ENCODE measurements at regions of chr22 and their contacts with region 1.

Region 1: DNA sequence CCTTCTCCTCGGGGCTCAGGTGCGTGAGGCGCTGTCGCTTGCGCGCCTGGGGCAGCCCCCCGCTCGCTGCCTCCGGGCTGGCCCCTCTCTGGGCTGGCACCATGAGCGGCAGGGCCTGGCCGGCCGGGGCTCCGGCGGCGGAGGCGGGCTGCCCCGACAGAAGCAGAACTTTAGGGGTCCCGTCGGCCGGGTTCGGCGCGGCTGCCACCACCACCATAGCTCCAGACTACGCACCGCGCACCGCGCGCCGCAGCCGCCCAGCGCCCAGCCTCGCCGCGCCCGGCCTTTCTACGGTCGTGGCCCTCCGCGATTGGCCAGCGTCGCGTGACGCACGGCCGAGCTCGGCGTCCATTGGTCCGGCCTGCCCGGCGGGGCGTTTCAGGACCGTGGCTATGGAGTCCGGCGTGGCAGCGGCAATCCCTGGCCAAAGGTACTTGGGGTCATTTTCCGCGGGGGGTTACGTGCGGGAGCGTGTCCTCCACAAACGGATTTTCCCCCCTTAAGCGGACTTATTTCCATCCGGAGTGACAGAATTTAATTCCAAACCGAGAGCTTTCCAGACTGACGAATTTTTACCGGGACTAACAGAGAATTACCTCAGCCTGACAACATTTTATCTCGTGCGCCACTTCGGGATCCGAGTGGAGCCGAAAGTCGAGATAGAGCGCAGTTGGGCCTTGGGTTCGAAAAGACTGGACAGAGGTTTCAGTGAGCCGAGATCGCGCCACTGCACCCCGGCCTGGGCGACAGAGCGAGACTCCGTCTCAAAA is at the start of gene XBP1:
- DNase-seq: peak; percentile 93 to 96
- ATAC-seq: peak; percentile 97 to 99 (median 98)
- H3K4me3 ChIP-seq: peak within 1 kb of the TSS; percentile 39 to 96 (median 88)
- H3K27ac ChIP-seq: peak within 1 kb of the TSS; percentile 93 to 100 (median 100)
- H3K4me1 ChIP-seq: peaks cover 11 to 62% (median 55%) of the 10 kb centered on the region in 9 donors
- H3K27me3 ChIP-seq: no peaks in the 10 kb centered on the region
- CTCF ChIP-seq: no peak
- total RNA-seq, gene XBP1: 56.5 to 140 (median 67.9) TPM

Region 2: GRCh38 chr22:28594797-28595462 is 205.6 kb before region 1 on chr22:
- intact Hi-C with region 1: no loop called
- DNase-seq: no peak
- ATAC-seq: peak; percentile 70 to 92 (median 90)
- H3K4me3 ChIP-seq: no peak overlapping the region
- H3K27ac ChIP-seq: no peak overlapping the region
- H3K4me1 ChIP-seq: peaks cover 0 to 8% (median 0%) of the 10 kb centered on the region in 9 donors
- H3K27me3 ChIP-seq: no peaks in the 10 kb centered on the region
- CTCF ChIP-seq: peak; percentile 49 to 91 (median 76)

Region 3: DNA sequence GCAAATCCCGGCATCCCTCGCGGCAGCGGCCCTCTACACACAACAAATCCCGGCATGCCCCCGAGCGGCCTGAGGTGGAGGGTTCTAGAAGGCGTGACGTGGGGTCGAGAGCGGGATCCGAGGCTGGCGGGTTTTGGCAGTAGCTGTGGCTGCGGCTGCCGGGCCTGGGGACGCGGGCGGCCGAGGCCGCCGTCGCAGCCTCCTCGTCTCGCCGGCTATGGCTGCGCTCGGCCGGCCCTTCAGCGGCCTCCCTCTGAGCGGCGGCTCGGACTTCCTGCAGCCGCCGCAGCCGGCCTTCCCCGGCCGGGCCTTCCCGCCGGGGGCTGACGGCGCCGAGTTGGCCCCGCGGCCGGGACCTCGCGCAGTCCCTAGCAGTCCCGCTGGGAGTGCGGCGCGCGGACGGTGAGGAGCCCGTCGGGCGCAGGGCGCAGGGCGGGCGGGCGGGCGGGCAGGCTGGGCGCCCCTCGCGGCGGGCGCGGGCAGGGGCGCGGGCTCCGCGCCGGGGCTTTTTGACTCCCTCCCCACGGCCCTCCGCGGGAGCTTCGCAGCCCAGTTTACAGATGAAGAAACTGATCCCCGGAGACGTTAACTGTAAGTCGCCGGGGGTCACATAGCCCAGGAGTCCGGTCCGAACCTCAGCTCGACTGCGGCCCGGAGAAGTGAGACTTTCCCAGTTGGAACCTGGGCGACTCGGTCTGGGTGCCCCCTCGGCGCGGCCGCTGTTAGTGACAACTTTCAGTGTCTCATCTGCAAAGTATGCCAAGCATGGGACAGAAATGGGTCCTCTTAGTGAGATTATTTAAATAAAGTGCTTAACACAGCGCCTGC is 27.6 kb before region 1 on chr22 and contains the start of gene CCDC117:
- intact Hi-C with region 1: loop called in 1 of 10 experiments (anchors 1 kb)
- DNase-seq: peak; percentile 95
- ATAC-seq: peak; percentile 97 to 99 (median 98)
- H3K4me3 ChIP-seq: peak within 1 kb of the TSS; percentile 65 to 88 (median 78)
- H3K27ac ChIP-seq: peak within 1 kb of the TSS; percentile 87 to 99 (median 97)
- H3K4me1 ChIP-seq: peaks cover 5 to 46% (median 33%) of the 10 kb centered on the region in 9 donors
- H3K27me3 ChIP-seq: no peaks in the 10 kb centered on the region
- CTCF ChIP-seq: peak in 4 of 9 donors; percentile 32 to 54 (median 36)
- total RNA-seq, gene CCDC117: 7.7 to 15.0 (median 11.5) TPM

Region 4: DNA sequence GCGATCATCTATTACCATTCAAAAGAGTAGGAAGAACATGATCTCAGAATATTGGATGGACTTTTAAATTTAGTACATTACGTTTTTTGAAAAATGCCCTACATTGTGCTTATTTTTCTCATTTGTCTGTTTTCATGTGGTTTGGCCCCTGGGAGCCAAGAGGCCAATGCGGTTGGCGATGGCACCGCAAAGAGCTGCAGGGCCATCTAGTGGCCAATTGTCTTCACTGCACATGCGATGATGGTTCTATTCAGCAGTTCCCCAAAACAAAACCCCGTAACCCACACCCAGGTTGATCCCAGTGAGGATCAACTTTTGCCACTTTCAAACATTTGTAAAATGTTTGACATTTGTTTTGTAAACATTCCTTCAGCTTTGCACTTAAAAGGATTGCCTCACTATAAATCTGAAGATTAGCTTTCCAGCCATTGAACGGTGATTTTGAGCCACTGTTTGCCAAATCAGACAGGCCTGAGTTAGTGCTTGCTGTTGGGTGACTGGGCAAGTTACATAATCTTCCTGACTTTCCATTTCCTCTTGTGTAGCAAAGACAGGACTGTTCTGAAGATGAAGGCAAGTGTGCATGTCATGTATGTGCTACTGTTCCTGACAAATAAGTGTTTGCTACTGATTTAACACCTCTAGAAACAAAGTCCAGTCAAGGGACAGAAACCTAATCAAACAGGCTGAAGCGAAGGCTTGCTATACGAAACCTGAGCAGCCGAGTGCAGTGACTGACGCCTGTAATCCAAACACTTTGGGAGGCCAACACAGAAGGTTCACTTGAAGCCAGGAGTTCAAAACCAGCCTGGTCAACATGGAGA is 29.1 kb after region 1 on chr22:
- intact Hi-C with region 1: no loop called
- DNase-seq: peak; percentile 67 to 74
- ATAC-seq: peak; percentile 78 to 93 (median 88)
- H3K4me3 ChIP-seq: no peak overlapping the region
- H3K27ac ChIP-seq: peak overlapping the region in 1 of 10 donors; percentile 29
- H3K4me1 ChIP-seq: peaks cover 0 to 12% (median 0%) of the 10 kb centered on the region in 9 donors
- H3K27me3 ChIP-seq: no peaks in the 10 kb centered on the region
- CTCF ChIP-seq: peak; percentile 97 to 99 (median 98)

Region 5: DNA sequence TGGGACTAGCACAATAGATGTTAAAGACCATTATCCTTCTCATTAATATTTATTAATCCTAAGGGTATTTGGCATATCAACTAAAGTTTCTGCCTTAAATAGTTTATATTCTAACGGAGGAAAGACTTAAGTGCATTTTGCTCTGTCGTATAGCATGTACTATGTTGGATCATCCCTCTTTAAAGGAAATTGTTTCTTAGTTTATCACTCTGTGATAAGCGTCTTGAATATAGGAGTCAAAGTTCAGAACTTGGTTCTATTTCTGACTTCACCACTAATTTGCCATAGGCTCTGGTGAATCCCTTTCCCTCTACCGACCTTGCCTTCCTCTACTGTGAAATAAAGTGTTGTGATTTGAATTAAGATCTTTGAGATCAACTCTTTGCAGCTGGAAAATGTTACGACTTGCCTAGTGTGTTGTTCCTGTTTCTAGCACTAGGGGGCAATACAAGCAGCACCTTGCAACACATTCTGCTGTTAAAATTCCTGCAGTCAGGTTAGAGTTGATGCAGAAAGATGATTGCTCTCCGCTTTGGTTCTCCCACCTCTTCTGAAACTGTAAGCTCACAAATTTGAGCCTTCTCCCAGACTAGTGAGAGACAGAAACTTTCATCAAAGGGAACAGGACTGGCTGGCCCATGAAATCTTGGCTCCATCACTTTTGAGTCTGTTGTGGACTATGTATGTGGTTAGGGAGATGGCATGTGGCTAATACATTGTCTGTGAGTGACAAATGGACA is 55.0 kb after region 1 on chr22:
- intact Hi-C with region 1: no loop called
- DNase-seq: peak in 1 of 2 donors; percentile 57
- ATAC-seq: peak in 7 of 8 donors; percentile 41 to 62 (median 54)
- H3K4me3 ChIP-seq: no peak overlapping the region
- H3K27ac ChIP-seq: no peak overlapping the region
- H3K4me1 ChIP-seq: peaks cover 0 to 7% (median 0%) of the 10 kb centered on the region in 9 donors
- H3K27me3 ChIP-seq: no peaks in the 10 kb centered on the region
- CTCF ChIP-seq: peak; percentile 84 to 94 (median 91)

Region 6: DNA sequence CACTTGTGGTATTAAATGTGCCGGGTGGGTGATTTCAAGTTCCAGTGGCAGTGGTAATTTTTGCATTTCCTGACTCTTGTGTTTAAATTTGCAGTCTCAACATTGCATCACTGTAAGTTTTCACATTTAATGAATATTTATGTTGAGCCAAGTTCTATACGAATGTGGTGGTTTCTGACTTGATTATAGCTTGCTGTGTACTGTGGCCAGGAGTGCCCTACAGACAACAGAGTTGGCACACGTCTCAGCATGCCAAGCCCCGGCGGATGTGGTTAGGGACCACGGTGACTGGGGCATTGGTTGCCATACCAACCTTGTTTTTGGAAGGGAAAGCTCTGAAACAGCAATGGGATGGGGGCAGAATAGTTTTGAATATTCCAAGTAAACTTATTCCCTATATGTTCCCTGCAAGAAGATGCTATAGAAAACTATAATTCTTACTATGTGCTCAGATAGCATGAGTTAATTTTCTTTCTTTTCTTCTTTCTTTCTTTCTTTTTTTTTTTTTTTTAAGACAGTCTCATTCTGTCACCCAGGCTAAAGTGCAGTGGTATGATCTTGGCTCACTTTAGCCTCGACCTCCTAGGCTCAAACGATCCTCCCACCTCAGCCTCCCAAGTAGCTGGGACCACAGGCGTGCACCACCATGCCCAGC is 98.8 kb after region 1 on chr22:
- intact Hi-C with region 1: loop called in 1 of 10 experiments (anchors 5 kb)
- DNase-seq: no peak
- ATAC-seq: no peak
- H3K4me3 ChIP-seq: no peak overlapping the region
- H3K27ac ChIP-seq: no peak overlapping the region
- H3K4me1 ChIP-seq: peaks cover 0 to 30% (median 17%) of the 10 kb centered on the region in 9 donors
- H3K27me3 ChIP-seq: no peaks in the 10 kb centered on the region
- CTCF ChIP-seq: no peak

Measured in heart right ventricle (tissue), 16 donors.